Activated B cell treated with CpG ODN at 0.5 μM for 24 hours (primary cell): ENCODE measurements at regions of chr15 and their contacts with region 1.

Region 1: DNA sequence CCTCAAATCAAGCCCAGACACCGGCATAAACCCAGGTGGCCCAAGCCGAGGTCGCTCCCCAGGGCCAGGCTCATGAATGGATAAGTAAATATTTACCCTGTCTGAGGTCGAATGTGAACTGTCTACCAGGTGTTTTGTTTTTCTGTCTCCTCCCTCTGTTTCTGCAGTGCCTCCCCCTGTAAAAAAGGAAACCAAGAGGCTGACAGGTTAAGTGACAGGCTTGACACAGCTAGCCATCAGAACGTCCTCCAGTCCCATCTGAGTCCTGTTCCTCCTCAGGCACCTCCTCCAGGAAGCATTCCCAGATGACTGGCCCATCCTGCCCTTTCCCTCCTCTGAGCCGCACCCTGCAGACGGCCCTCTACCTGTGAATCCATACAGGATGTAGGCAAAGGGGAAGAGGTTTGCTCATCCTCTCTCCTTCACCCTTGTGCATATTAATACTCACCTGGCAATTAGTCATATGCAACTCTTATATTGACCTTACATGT is 61.8 kb downstream of the SMAD3 start:
- DNase-seq: no peak
- ATAC-seq: no peak
- H3K4me3 Mint-ChIP-seq: no peak overlapping the region
- H3K27ac Mint-ChIP-seq: peak overlapping the region; percentile 67
- H3K4me1 Mint-ChIP-seq: peaks cover 89% of the 10 kb centered on the region
- H3K27me3 Mint-ChIP-seq: no peaks in the 10 kb centered on the region
- CTCF ChIP-seq: no peak

Region 2: DNA sequence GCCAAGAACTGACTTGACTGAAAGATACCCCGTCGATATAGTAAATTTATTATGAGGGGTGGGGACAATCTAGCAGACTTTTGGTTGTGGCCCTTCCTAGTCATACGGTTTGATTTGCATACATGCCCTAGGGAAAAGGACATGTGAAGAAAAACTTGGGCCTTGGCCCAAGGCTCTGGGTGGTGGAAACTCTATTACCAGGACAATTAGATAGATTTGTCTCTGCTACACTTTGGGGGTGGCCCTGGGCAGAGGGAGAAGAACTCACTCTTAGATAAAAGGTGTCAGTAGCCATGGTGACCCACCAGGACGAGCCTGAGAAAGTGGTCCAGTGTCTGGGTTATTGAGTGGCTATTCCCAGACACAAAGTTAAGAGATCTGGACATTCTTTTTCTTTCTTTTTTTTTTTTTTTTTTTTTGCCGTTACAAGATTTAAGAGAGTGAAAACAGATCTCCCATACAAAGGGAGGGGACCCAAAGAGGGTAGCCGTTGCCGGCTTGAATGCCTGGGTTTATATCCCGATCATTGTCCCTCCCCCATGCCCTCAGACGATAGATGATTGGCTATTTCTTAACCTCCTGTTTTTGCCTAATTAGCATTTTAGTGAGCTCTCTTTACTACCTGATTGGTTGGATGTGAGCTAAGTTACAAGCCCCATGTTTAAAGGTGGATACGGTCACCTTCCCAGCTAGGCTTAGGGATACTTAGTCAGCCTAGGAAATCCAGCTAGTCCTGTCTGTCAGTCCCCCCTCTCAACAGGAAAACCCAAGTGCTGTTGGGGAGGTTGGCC is 158.2 kb before region 1 on chr15:
- CTCF ChIA-PET with region 1: no interaction called
- POLR2A ChIA-PET with region 1: interaction called, 13 read pairs
- intact Hi-C with region 1: no loop called
- DNase-seq: no peak
- ATAC-seq: no peak
- H3K4me3 Mint-ChIP-seq: no peak overlapping the region
- H3K27ac Mint-ChIP-seq: no peak overlapping the region
- H3K4me1 Mint-ChIP-seq: no peaks in the 10 kb centered on the region
- H3K27me3 Mint-ChIP-seq: peaks cover 2% of the 10 kb centered on the region
- CTCF ChIP-seq: no peak